Endothelial cell of umbilical vein (primary cell): ENCODE measurements at regions of chr17 and their contacts with region 1.

Region 1: GRCh38 chr17:72120642-72121163 is at the start of gene SOX9:
- DNase-seq: no peak
- H3K4me3 ChIP-seq: no peak within 1 kb of the TSS
- H3K27ac ChIP-seq: no peak within 1 kb of the TSS
- H3K4me1 ChIP-seq: no peaks in the 10 kb centered on the region
- H3K27me3 ChIP-seq: peaks cover 55 to 84% of the 10 kb centered on the region in 2 experiments
- CTCF ChIP-seq: no peak
- POLR2A ChIP-seq: no peak
- total RNA-seq, gene SOX9: not detected in 2 replicates

Region 2: DNA sequence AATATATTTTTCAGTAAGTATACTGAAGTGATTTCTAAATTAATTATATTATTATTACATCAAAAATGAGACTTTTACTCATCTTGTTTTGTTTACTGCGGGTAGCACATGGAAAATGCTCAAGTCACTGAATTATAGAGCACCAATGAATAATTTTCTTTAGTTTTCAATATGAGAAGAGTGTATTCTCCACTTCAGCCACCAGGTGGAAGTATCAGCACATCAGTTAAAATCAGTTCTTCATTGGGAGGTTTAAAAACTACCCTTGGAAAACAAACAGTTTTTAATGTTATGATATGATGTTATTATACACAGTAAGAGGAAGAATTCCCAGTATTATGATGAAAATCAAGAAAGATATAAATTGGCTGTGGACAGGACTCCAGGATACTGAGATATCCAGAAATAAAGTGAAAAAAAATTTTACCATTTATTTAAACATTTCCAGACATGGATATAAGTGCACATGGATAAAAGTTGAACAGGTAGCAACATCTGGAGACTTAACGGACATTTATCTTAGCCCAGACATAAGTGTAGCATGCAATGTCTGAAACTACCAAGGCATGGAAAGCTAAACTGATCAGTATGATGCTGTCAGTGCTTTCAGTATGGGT is 1484.1 kb before region 1 on chr17:
- CTCF ChIA-PET with region 1: no interaction called
- POLR2A ChIA-PET with region 1: no interaction called
- dilution Hi-C with region 1: no loop called
- intact Hi-C with region 1: loop called (anchors 1 kb)
- DNase-seq: peak; percentile 61
- H3K4me3 ChIP-seq: no peak overlapping the region
- H3K27ac ChIP-seq: no peak overlapping the region
- H3K4me1 ChIP-seq: no peaks in the 10 kb centered on the region
- H3K27me3 ChIP-seq: peaks cover 2 to 8% of the 10 kb centered on the region in 2 experiments
- CTCF ChIP-seq: peak; percentile 31 to 45
- POLR2A ChIP-seq: no peak

Region 3: GRCh38 chr17:70767102-70767701 is 1353.5 kb before region 1 on chr17:
- CTCF ChIA-PET with region 1: no interaction called
- POLR2A ChIA-PET with region 1: no interaction called
- dilution Hi-C with region 1: no loop called
- intact Hi-C with region 1: loop called (anchors 5 kb)
- DNase-seq: no peak
- H3K4me3 ChIP-seq: no peak overlapping the region
- H3K27ac ChIP-seq: no peak overlapping the region
- H3K4me1 ChIP-seq: no peaks in the 10 kb centered on the region
- H3K27me3 ChIP-seq: no peaks in the 10 kb centered on the region
- CTCF ChIP-seq: peak; percentile 17 to 23
- POLR2A ChIP-seq: no peak